ENCODE measurements at regions of chr7 and their contacts with region 1.

Region 1: GRCh38 chr7:114026486-114027089 is 107.8 kb upstream of the PPP1R3A start:
- DNase-seq: peak; percentile 77
- H3K4me3 Mint-ChIP-seq: no peak overlapping the region
- H3K27ac Mint-ChIP-seq: no peak overlapping the region
- H3K4me1 Mint-ChIP-seq: no peaks in the 10 kb centered on the region
- H3K27me3 Mint-ChIP-seq: peaks cover 2% of the 10 kb centered on the region

Region 2: DNA sequence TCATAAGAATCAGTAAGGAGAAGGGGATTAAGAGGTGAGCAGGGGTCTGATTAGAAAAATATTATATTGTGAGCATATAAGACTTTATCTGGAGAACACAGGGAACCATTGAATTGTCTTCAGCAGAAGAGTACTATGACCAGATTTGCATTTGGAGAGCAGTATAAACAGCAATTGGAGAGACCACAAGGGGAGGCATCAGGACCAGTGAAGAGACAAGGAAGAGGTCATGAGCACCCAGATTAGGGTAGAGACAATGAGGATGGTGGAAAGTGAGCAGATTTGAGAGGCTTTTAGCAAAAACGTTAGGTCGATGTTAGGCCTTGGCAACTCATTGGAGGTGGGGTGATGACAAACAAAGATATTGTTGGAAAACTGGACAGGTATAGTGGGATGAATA is 895.2 kb before region 1 on chr7:
- intact Hi-C with region 1: no loop called
- DNase-seq: no peak
- H3K4me3 Mint-ChIP-seq: no peak overlapping the region
- H3K27ac Mint-ChIP-seq: no peak overlapping the region
- H3K4me1 Mint-ChIP-seq: no peaks in the 10 kb centered on the region
- H3K27me3 Mint-ChIP-seq: peaks cover 2% of the 10 kb centered on the region

Region 3: DNA sequence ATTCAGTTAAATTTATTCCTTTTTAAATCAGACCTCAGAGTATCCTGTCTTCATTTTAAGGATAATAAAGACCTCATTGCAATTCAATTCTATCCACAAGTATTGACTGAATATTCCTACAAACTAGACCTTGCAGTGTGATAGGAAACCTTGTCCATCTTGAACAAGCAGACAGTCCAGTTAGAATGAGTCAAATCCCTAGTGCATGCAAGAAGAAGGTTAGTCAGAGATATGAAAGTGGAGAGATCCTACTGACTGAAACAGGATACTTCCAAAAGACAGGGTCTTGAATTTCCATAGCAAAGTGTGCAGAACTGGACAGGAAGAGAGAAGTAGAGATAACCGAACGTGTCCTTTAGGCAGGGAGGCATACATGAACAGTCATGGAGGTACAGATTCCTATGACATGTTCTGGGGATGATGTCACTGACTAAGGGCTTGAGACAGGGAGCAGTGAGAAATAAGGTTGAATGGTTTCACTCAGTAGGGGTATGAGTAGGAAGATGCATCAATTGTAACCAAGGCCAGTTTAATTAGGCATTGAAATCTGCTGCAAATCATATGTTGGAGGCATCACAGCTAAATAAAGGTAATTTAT is 152.9 kb before region 1 on chr7:
- intact Hi-C with region 1: no loop called
- DNase-seq: no peak
- H3K4me3 Mint-ChIP-seq: no peak overlapping the region
- H3K27ac Mint-ChIP-seq: no peak overlapping the region
- H3K4me1 Mint-ChIP-seq: no peaks in the 10 kb centered on the region
- H3K27me3 Mint-ChIP-seq: no peaks in the 10 kb centered on the region

Region 4: GRCh38 chr7:113955157-113955556 is 71.4 kb before region 1 on chr7:
- intact Hi-C with region 1: no loop called
- DNase-seq: no peak
- H3K4me3 Mint-ChIP-seq: no peak overlapping the region
- H3K27ac Mint-ChIP-seq: no peak overlapping the region
- H3K4me1 Mint-ChIP-seq: no peaks in the 10 kb centered on the region
- H3K27me3 Mint-ChIP-seq: no peaks in the 10 kb centered on the region

Region 5: GRCh38 chr7:115851291-115851690 is 1824.7 kb after region 1 on chr7:
- intact Hi-C with region 1: loop called (anchors 2 kb)
- DNase-seq: no peak
- H3K4me3 Mint-ChIP-seq: no peak overlapping the region
- H3K27ac Mint-ChIP-seq: no peak overlapping the region
- H3K4me1 Mint-ChIP-seq: no peaks in the 10 kb centered on the region
- H3K27me3 Mint-ChIP-seq: no peaks in the 10 kb centered on the region

Region 6: GRCh38 chr7:115910541-115911164 is 1884.1 kb after region 1 on chr7:
- intact Hi-C with region 1: loop called (anchors 2 kb)
- DNase-seq: no peak
- H3K4me3 Mint-ChIP-seq: no peak overlapping the region
- H3K27ac Mint-ChIP-seq: no peak overlapping the region
- H3K4me1 Mint-ChIP-seq: no peaks in the 10 kb centered on the region
- H3K27me3 Mint-ChIP-seq: peaks cover 5% of the 10 kb centered on the region